ENCODE measurements at regions of chr16 and their contacts with region 1.

Region 1: GRCh38 chr16:48164907-48165726 is 9.3 kb upstream of the ABCC12 start:
- DNase-seq: peak; percentile 56
- H3K4me3 ChIP-seq: no peak overlapping the region
- H3K27ac ChIP-seq: no peak overlapping the region
- H3K4me1 ChIP-seq: peaks cover 2% of the 10 kb centered on the region
- H3K27me3 ChIP-seq: no peaks in the 10 kb centered on the region
- CTCF ChIP-seq: peak; percentile 66 to 88
- POLR2A ChIP-seq: no peak

Region 2: GRCh38 chr16:46673320-46674013 is 1491.7 kb before region 1 on chr16:
- CTCF ChIA-PET with region 1: interaction called, 19 read pairs
- POLR2A ChIA-PET with region 1: no interaction called
- dilution Hi-C with region 1: no loop called
- intact Hi-C with region 1: no loop called
- DNase-seq: peak; percentile 62
- H3K4me3 ChIP-seq: no peak overlapping the region
- H3K27ac ChIP-seq: no peak overlapping the region
- H3K4me1 ChIP-seq: no peaks in the 10 kb centered on the region
- H3K27me3 ChIP-seq: no peaks in the 10 kb centered on the region
- CTCF ChIP-seq: peak; percentile 85 to 91
- POLR2A ChIP-seq: no peak

Region 3: GRCh38 chr16:46973207-46973995 is 1191.7 kb before region 1 on chr16 and contains the start of gene DNAJA2:
- CTCF ChIA-PET with region 1: interaction called, 31 read pairs
- POLR2A ChIA-PET with region 1: no interaction called
- dilution Hi-C with region 1: no loop called
- intact Hi-C with region 1: loop called (anchors 10 kb)
- DNase-seq: peak; percentile 91
- H3K4me3 ChIP-seq: peak within 1 kb of the TSS; percentile 76 to 94 (median 89)
- H3K27ac ChIP-seq: peak within 1 kb of the TSS; percentile 18
- H3K4me1 ChIP-seq: peaks cover 19% of the 10 kb centered on the region
- H3K27me3 ChIP-seq: no peaks in the 10 kb centered on the region
- CTCF ChIP-seq: no peak
- POLR2A ChIP-seq: peak; percentile 91
- total RNA-seq, gene DNAJA2: 57.5 and 61.4 TPM in 2 replicates

Region 4: GRCh38 chr16:47037746-47038458 is 1127.2 kb before region 1 on chr16:
- CTCF ChIA-PET with region 1: interaction called, 62 read pairs
- POLR2A ChIA-PET with region 1: no interaction called
- dilution Hi-C with region 1: no loop called
- intact Hi-C with region 1: loop called (anchors 1 kb)
- DNase-seq: peak; percentile 76
- H3K4me3 ChIP-seq: peak overlapping the region; percentile 36 to 64 (median 38)
- H3K27ac ChIP-seq: no peak overlapping the region
- H3K4me1 ChIP-seq: no peaks in the 10 kb centered on the region
- H3K27me3 ChIP-seq: peaks cover 0 to 2% of the 10 kb centered on the region in 2 experiments
- CTCF ChIP-seq: peak; percentile 92 to 95
- POLR2A ChIP-seq: no peak

Region 5: DNA sequence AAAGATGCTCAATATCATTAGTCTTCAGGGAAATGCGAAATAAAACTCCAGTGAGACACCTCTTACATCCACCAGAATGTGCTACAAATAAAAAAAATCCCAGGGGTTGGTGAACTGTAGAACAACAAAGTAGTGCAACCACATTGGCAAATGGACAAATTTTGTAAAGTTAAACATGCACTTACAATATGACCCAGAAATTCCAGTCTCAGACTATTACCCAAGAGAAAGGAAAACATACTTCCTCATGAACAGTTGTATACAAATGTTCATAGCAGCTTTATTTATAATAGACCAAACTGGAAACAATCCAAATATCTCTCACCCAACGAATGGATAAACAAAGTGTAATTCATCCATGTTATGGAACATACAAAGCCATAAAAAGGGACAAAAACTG is 248.9 kb before region 1 on chr16:
- CTCF ChIA-PET with region 1: no interaction called
- POLR2A ChIA-PET with region 1: no interaction called
- dilution Hi-C with region 1: no loop called
- intact Hi-C with region 1: no loop called
- DNase-seq: no peak
- H3K4me3 ChIP-seq: no peak overlapping the region
- H3K27ac ChIP-seq: no peak overlapping the region
- H3K4me1 ChIP-seq: no peaks in the 10 kb centered on the region
- H3K27me3 ChIP-seq: no peaks in the 10 kb centered on the region
- CTCF ChIP-seq: no peak
- POLR2A ChIP-seq: no peak

Region 6: GRCh38 chr16:48542020-48542473 is 376.9 kb after region 1 on chr16:
- CTCF ChIA-PET with region 1: interaction called, 3 read pairs
- POLR2A ChIA-PET with region 1: no interaction called
- dilution Hi-C with region 1: no loop called
- intact Hi-C with region 1: loop called (anchors 1 kb)
- DNase-seq: peak; percentile 49
- H3K4me3 ChIP-seq: no peak overlapping the region
- H3K27ac ChIP-seq: no peak overlapping the region
- H3K4me1 ChIP-seq: no peaks in the 10 kb centered on the region
- H3K27me3 ChIP-seq: no peaks in the 10 kb centered on the region
- CTCF ChIP-seq: peak; percentile 41 to 57
- POLR2A ChIP-seq: no peak